ENCODE measurements at regions of chr6 and their contacts with region 1.

Region 1: DNA sequence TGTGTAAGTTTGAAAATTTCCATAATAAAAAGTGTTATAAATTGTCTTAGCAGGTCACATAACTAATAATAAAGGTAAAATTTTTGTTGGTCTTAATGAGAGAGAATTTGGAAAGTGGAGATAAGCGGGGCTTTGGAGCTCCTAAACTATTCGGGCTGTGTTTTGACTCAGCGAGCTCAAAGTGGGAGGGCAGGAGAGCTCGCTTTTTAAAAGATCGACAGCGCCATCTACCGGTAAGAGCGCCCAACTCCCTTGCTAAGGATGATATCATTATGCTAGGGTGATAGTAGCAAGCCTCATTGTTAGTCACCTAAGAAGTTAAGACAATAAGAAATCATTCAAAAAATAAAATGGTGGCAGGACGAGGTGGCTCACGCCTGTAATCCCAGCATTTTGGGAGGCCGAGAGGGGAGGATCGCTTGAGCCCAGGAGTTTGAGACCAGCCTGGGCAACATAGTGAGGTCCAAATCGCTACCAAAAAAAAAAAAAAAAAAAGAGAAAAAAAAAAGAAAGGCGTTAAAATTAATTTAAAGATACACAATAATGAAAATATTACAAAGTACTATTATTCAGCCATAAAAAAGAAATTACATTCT is 24.8 kb downstream of the C6orf15 start:
- DNase-seq: peak; percentile 75
- H3K4me3 Mint-ChIP-seq: no peak overlapping the region
- H3K27ac Mint-ChIP-seq: no peak overlapping the region
- H3K4me1 Mint-ChIP-seq: peaks cover 10% of the 10 kb centered on the region
- H3K27me3 Mint-ChIP-seq: peaks cover 22% of the 10 kb centered on the region

Region 2: GRCh38 chr6:30541515-30542403 is 545.8 kb before region 1 on chr6:
- intact Hi-C with region 1: loop called (anchors 2 kb)
- DNase-seq: peak; percentile 69
- H3K4me3 Mint-ChIP-seq: peak overlapping the region; percentile 81
- H3K27ac Mint-ChIP-seq: peak overlapping the region; percentile 78
- H3K4me1 Mint-ChIP-seq: peaks cover 39% of the 10 kb centered on the region
- H3K27me3 Mint-ChIP-seq: no peaks in the 10 kb centered on the region

Region 3: DNA sequence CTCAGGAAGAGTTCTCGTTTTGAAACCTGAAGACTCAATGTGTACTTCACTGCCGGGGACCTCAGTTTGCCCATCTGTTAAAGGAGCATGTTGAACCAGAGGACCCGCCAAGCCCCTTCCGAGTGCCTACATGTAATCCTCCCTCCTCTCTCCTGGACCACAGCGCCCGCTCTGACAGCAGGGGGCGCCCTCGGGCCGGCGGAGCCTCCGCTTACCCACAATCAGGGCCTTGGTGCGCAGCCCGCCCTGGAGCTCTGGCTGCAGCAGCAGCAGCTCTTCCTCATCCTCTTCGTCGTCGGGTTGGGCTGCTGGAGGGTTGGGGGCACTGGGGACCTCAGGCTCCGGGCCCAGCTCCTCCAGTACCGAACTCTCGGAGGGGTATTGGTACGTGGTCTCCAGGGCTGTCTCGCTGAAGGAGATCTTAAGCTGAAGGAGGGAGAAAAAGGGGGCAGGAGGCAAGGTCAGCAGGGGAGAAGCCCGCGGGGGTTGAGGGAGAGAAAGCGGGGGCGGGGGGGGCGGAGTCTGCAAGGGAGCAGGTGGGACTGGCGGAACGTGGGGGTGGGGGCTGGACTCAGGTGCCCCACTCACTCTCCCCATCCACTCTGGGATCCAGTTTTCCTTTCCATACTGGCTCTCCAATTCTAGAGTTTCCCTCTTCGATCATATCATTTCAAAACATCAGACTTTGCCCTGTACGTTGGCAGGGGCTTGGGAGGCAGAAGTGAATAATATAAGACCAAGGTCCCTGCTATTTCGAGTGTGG is 408.4 kb before region 1 on chr6:
- intact Hi-C with region 1: loop called (anchors 1 kb)
- DNase-seq: peak; percentile 85
- H3K4me3 Mint-ChIP-seq: peak overlapping the region; percentile 94
- H3K27ac Mint-ChIP-seq: peak overlapping the region; percentile 90
- H3K4me1 Mint-ChIP-seq: peaks cover 26% of the 10 kb centered on the region
- H3K27me3 Mint-ChIP-seq: no peaks in the 10 kb centered on the region

Region 4: DNA sequence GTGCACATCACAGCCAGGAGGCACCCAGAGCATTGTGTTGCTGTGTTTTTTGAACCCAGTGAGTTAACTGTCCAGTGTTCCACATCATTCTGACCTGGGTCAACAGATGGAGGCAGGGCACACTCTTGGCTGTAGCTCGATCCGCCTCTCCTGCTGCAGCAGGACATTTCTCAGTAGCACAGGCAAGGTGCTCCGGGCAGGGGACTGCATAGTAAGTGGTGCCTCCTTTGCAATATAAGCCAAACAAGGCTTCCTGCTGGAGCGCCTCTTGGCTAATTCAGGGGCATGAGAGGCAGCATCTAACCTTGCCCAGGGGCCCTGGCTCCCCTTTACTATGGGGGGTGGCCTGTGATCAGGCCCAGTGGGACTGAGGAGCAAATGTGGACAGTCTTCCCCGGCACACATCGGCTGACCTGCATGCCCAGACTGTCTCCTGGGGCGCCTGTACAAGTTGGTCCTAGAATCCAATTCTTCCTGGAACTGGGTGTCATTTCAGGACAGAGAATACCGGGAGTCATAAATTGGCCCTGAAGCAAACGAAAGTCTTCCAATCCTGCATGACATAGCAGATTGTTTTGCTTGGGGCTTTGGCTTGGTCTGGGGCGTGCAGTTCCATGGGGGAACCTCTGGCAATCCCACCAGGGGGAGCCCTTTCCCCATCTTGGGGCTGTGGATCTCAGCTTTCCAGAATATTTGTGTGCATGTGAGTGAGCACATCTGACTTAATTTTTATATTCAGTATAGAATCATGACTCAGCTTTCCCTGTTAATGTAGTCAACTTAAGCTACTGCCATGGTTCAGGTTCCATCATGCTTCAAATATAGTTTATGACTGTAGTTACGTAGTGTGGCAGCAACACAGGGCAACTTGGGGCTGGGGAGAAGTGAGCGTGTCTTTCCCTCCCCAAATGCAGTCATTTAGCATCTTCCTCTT is 259.3 kb before region 1 on chr6:
- intact Hi-C with region 1: loop called (anchors 1 kb)
- DNase-seq: peak; percentile 66
- H3K4me3 Mint-ChIP-seq: peak overlapping the region; percentile 96
- H3K27ac Mint-ChIP-seq: peak overlapping the region; percentile 98
- H3K4me1 Mint-ChIP-seq: peaks cover 65% of the 10 kb centered on the region
- H3K27me3 Mint-ChIP-seq: no peaks in the 10 kb centered on the region

Region 5: DNA sequence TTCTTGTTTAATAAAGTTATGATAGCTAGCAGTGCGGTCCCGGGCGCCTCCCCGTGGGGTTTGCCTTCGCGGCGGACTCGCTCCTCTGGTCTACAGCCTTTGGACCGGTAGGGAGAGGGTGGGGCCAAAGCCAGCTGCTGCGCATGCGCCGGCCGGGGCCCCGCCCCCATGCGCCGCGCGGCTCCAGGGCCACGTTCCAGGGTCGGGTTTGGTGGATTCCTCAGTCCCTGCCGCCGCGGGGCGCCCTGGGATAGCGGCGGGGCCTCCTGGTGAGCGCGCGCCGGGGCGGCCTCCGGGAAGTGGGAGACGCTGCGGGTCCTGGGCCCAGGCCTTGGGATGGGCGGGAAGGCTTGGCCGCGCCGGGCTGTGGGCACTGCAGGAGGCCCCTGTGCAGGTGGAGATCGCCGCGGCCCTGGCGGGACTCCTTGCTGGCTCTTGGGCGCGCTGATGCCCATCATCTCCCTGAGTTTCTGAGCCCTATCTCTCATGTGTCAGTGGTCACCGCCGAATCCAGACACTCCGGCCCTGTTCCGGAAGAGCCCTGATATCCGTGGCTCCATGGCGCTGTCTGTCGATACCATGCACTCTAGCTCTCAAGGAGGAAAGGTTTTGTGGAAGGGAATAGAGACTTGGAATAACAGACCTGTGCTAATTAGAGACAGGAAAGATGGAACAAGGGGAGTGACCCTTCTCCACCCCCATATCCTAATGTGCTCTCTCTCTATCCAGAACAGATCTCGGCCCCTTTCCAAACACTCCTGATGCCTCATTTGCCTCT is 173.3 kb before region 1 on chr6 and contains the start of gene VARS2:
- intact Hi-C with region 1: loop called (anchors 1 kb)
- DNase-seq: peak; percentile 88
- H3K4me3 Mint-ChIP-seq: peak within 1 kb of the TSS; percentile 94
- H3K27ac Mint-ChIP-seq: peak within 1 kb of the TSS; percentile 97
- H3K4me1 Mint-ChIP-seq: peaks cover 40% of the 10 kb centered on the region
- H3K27me3 Mint-ChIP-seq: no peaks in the 10 kb centered on the region
- total RNA-seq, gene VARS2: 74.0 and 76.0 TPM in 2 replicates